ENCODE measurements at regions of chr3 and their contacts with region 1.

Region 1: DNA sequence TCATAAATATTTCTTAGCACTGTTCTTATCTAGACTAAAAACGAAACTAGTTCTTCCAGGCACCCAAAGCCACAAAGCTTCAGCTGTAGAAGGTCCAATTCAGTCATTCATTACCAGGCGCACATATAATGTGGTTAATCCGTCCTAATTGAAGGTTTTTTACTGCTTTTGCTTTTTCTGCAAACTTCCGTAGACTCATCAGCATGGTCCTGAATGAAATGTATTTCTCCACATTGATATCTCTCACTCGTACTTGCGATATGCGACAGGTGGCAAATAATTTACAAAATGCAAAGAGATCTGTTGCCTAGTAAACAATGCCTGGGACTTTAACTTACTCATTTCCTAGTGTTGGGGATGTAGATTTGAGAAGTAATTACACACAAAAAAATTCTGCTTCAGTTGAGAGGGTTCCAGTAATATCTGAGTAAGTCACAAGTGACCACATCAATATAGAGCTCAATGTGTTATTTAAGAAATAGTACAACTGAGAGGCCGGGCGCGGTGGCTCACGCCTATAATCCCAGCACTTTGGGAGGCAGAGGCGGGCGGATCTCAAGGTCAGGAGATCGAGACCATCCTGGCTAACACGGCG is 75.0 kb upstream of the MBNL1 start:
- DNase-seq: no peak
- H3K4me3 ChIP-seq: no peak overlapping the region
- H3K27ac ChIP-seq: no peak overlapping the region
- H3K4me1 ChIP-seq: no peaks in the 10 kb centered on the region
- H3K27me3 ChIP-seq: peaks cover 0 to 2% (median 0%) of the 10 kb centered on the region in 4 experiments; a peak in 1 of 7 replicates
- CTCF ChIP-seq: no peak
- EP300 ChIP-seq: no peak
- POLR2A ChIP-seq: no peak
- RAD21 ChIP-seq: no peak

Region 2: DNA sequence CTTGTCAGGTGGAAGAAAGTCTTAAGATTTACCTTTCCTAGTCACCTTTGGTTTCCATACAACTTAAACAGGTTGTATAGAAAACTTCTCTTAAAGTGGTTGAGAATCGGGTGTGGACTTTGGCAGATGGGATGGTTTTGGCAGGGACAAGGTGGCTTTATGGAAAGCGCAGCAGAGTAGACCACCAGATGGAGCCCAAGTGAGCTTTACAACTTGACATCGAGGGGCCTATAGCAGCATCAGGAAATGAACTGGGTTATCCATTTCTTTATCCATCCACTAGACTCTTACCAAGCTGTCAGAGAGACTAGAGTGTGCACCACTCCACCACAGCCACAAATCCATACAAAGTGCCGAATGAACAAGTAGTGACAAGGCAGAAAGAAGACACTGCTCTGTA is 10.3 kb before region 1 on chr3:
- CTCF ChIA-PET with region 1: interaction called, 10 read pairs
- POLR2A ChIA-PET with region 1: no interaction called
- DNase-seq: peak in 1 of 2 experiments; percentile 53
- H3K4me3 ChIP-seq: no peak overlapping the region
- H3K27ac ChIP-seq: no peak overlapping the region
- H3K4me1 ChIP-seq: no peaks in the 10 kb centered on the region
- H3K27me3 ChIP-seq: peaks cover 0 to 1% (median 0%) of the 10 kb centered on the region in 4 experiments; a peak in 1 of 7 replicates
- CTCF ChIP-seq: peak; percentile 57 to 77 (median 67)
- EP300 ChIP-seq: no peak
- POLR2A ChIP-seq: no peak
- RAD21 ChIP-seq: peak; percentile 77 to 81